IMR-90 (cell line): ENCODE measurements at regions of chr5 and their contacts with region 1.

Region 1: GRCh38 chr5:149357370-149358293 is at the start of gene PCYOX1L:
- DNase-seq: peak; percentile 93
- ATAC-seq: peak; percentile 100
- H3K4me3 ChIP-seq: peak within 1 kb of the TSS; percentile 67
- H3K27ac ChIP-seq: no peak within 1 kb of the TSS; the same call in 1 of the 2 replicates
- H3K4me1 ChIP-seq: no peaks in the 10 kb centered on the region
- H3K27me3 ChIP-seq: no peaks in the 10 kb centered on the region
- CTCF ChIP-seq: no peak
- POLR2A ChIP-seq: no peak
- RAD21 ChIP-seq: no peak
- total RNA-seq, gene PCYOX1L: 5.8 and 7.0 TPM in 2 replicates

Region 2: DNA sequence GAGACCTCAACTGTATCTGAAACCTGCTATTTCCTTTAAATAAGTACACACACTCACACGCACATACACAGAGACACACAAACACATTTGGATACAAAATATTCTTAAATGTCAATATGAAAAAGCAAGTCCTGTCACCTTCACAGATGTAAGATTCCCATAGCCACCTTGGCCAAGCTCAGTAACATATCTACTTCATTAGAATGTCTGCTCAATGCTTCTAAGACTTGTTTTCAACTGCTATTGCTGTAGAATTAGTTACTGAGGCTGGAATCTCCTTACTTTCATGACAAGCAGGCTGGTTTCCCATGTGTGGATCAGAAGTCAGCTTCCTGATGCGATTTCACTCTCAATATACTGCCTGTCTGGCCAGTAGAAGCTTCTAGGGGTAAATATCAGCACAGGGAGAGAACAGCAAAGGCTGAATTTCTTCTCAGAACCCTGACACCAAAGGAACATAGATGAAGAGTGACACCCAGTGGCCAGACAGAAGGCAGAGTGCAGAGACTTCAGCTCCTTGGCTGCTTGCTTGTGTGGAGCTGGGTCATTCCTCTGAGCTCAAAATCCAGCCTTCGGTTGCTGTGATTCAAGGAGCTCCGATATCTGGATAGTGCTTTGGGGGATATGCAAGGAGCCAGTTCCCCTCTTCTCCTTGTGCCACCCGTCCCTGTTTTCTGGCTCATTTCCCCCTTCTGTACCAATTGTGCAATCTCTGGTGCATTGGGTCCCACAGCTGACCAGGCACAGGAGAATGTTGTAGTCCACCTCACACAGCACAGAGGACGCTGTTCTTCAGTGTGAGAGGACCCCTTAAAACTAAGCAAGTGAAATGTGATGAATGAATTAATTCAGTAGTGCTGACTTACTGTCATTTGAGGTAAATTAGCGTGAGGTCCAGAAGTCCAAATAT is 243.0 kb before region 1 on chr5:
- CTCF ChIA-PET with region 1: no interaction called
- POLR2A ChIA-PET with region 1: no interaction called
- dilution Hi-C with region 1: no loop called
- in situ Hi-C with region 1: no loop called
- intact Hi-C with region 1: no loop called
- DNase-seq: peak; percentile 84
- ATAC-seq: peak; percentile 96
- H3K4me3 ChIP-seq: no peak overlapping the region
- H3K27ac ChIP-seq: peak overlapping the region; percentile 20; the same call in 1 of the 2 replicates
- H3K4me1 ChIP-seq: peaks cover 5% of the 10 kb centered on the region; the same call in 1 of the 2 replicates
- H3K27me3 ChIP-seq: no peaks in the 10 kb centered on the region
- CTCF ChIP-seq: peak; percentile 87
- POLR2A ChIP-seq: no peak; the same call in 1 of the 2 replicates
- RAD21 ChIP-seq: peak; percentile 90

Region 3: GRCh38 chr5:149317281-149318048 is 40.2 kb before region 1 on chr5:
- CTCF ChIA-PET with region 1: interaction called, 3 read pairs
- POLR2A ChIA-PET with region 1: interaction called, 10 read pairs
- dilution Hi-C with region 1: no loop called
- in situ Hi-C with region 1: no loop called
- intact Hi-C with region 1: no loop called
- DNase-seq: peak; percentile 58
- ATAC-seq: peak; percentile 56
- H3K4me3 ChIP-seq: no peak overlapping the region
- H3K27ac ChIP-seq: 0 out of 2 replicates have a peak overlapping the region, but pooled peaks have one; percentile 4
- H3K4me1 ChIP-seq: peaks cover 6% of the 10 kb centered on the region
- H3K27me3 ChIP-seq: no peaks in the 10 kb centered on the region
- CTCF ChIP-seq: peak; percentile 77
- POLR2A ChIP-seq: no peak
- RAD21 ChIP-seq: peak; percentile 76

Region 4: GRCh38 chr5:149765932-149766331 is 408.3 kb after region 1 on chr5:
- CTCF ChIA-PET with region 1: no interaction called
- POLR2A ChIA-PET with region 1: no interaction called
- dilution Hi-C with region 1: no loop called
- in situ Hi-C with region 1: no loop called
- intact Hi-C with region 1: no loop called
- DNase-seq: no peak
- ATAC-seq: no peak
- H3K4me3 ChIP-seq: no peak overlapping the region
- H3K27ac ChIP-seq: no peak overlapping the region
- H3K4me1 ChIP-seq: no peaks in the 10 kb centered on the region
- H3K27me3 ChIP-seq: peaks cover 27% of the 10 kb centered on the region
- CTCF ChIP-seq: 0 out of 2 replicates have a peak, but pooled peaks have one; percentile 2
- POLR2A ChIP-seq: no peak
- RAD21 ChIP-seq: no peak